ENCODE measurements at regions of chr1 and their contacts with region 1.

Region 1: DNA sequence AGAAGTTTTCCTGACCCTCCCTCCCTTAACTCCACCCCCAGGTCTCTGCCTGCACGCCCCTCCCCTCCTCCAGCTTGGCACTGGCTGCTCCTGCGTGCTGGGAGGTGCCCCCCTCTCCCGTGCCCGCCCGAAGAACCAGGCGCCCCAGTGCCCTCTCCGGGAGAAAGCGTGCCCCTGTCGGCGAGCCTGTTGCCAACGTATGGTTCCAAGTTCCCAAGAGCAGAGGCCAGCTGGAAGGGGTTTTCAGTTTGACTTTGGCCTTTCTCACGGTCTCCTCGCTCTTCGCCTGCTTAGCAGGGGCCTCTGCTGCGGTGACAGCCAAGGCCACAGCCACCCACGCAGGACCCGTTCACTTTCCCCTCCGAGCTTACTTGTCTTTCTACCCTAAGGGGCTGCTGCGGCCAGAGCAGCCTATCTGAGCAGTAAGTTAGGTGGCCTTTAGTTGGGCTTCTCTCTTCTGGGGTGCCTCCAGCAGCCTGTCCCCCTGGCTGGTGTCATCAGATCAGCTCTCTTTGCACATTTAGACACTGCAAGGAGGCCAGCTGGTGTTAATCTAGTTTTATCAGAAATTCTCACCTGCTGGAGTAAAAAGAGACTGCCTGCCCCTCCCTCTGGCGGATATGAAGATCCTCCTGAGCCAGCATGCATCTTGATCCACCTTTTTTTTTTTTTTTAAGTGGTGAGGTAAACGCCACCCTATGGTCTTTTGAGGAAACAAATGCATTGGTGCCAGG is 1.5 kb downstream of the STUM start:
- DNase-seq: peak; percentile 46
- H3K4me3 ChIP-seq: no peak overlapping the region
- H3K27ac ChIP-seq: no peak overlapping the region
- H3K4me1 ChIP-seq: no peaks in the 10 kb centered on the region
- H3K27me3 ChIP-seq: peaks cover 74% of the 10 kb centered on the region

Region 2: DNA sequence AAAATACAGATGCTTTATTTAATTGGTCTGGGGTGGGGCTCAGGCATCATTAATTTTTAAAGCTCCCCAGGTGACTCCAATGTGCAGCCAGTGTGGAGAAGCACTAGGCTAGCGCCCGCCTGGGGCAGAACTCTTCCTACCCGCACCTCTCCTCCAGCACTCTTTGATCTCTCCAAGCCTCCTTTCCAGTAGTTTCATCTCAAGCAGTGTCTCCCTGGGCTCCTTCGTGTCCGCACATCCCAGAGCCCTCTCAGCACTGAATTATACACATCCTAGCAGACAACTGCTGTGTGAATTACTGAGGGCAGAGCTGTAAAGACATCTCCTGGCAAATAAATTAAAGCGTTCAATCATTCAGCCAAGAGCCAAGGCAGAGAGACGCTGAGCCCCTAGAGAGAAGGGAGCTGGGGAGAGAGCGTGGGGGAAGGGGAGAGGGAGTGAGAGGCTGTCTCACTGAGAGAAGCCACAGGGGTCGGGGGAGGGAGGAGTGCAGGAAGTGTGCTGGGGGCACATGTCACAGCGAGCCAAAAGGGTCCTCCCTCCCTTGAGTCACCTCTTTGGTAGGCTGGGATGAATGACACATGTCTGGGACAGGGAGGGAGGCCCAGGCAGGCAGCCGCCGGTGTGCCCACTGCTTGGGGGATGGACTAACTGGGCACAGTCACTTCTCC is 121.2 kb before region 1 on chr1:
- in situ Hi-C with region 1: no loop called
- DNase-seq: no peak
- H3K4me3 ChIP-seq: no peak overlapping the region
- H3K27ac ChIP-seq: no peak overlapping the region
- H3K4me1 ChIP-seq: no peaks in the 10 kb centered on the region
- H3K27me3 ChIP-seq: peaks cover 25% of the 10 kb centered on the region

Region 3: DNA sequence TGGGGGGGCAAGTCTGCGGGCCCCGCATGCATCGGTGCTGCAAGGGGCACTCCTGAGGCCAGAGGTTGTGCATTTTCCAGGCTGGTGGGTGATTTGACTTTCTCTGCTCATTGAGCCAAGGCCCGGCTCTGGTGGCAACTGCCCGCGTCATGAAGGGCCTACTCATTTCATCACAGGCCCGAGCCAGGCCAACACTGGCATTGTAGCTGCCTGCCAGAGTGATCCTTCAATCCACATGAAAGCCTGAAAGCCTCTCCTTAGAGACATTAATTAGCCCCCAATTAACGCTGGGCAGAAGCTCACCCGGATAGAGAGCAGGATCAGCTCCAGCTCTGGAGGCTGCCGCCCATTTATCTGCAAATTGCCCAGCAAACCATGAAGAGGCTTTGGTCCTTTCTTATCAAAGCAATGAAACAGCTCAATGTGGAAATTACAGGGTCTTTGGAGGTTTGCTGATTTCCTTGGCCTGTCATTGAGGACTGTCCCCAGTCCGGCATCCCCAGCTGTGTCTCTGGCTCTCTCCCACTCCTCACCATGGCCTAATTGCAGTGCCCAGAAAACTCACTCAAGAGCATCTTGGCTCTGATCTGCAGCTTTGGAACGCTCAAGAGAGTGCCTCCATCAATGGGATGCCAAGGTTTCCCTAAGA is 52.0 kb before region 1 on chr1:
- in situ Hi-C with region 1: no loop called
- DNase-seq: no peak
- H3K4me3 ChIP-seq: no peak overlapping the region
- H3K27ac ChIP-seq: no peak overlapping the region
- H3K4me1 ChIP-seq: no peaks in the 10 kb centered on the region
- H3K27me3 ChIP-seq: no peaks in the 10 kb centered on the region; the same call in 1 of the 2 replicates

Region 4: DNA sequence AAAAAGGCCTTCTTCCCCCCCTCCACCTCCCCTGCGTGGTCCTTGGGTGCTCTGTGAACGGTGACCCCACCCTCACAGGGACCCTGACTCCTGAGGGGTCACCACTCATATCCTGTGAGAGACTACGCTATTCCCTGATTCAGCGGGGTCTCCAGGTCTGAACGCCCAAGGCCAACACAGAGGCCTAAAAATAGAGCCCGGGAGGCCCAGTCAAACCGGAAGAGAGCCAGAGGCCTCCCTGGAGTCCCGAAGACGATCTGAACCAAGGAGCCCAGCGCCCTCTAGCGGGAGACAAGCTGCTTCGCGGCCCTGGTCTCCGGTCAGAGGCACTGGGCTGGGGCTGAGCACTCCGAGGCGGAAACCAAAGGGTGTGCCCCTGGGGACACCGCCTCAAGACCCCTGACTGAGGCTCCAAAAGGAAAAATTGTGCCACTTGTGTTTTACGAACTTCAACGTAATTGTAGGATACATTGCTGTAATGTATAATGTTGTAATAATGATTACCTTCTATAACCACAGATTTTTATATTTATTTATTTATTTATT is 277.9 kb after region 1 on chr1:
- in situ Hi-C with region 1: loop called (anchors 10 kb)
- DNase-seq: peak; percentile 97
- H3K4me3 ChIP-seq: peak overlapping the region; percentile 34; the same call in 1 of the 2 replicates
- H3K27ac ChIP-seq: peak overlapping the region; percentile 10; the same call in 1 of the 2 replicates
- H3K4me1 ChIP-seq: peaks cover 7% of the 10 kb centered on the region
- H3K27me3 ChIP-seq: no peaks in the 10 kb centered on the region

Measured in GM23248 (cell line).